GM12878 (cell line): ENCODE measurements at regions of chr16 and their contacts with region 1.

Region 1: GRCh38 chr16:50152807-50153452 is at the start of gene TENT4B:
- DNase-seq: peak; percentile 57
- ATAC-seq: peak; percentile 78
- H3K4me3 ChIP-seq: peak within 1 kb of the TSS; percentile 87
- H3K27ac ChIP-seq: peak within 1 kb of the TSS; percentile 96
- H3K4me1 ChIP-seq: peaks cover 6% of the 10 kb centered on the region
- H3K27me3 ChIP-seq: no peaks in the 10 kb centered on the region
- CTCF ChIP-seq: no peak
- EP300 ChIP-seq: no peak
- POLR2A ChIP-seq: peak; percentile 94
- RAD21 ChIP-seq: no peak
- polyA plus RNA-seq, gene TENT4B: 11.7 to 16.7 TPM

Region 2: DNA sequence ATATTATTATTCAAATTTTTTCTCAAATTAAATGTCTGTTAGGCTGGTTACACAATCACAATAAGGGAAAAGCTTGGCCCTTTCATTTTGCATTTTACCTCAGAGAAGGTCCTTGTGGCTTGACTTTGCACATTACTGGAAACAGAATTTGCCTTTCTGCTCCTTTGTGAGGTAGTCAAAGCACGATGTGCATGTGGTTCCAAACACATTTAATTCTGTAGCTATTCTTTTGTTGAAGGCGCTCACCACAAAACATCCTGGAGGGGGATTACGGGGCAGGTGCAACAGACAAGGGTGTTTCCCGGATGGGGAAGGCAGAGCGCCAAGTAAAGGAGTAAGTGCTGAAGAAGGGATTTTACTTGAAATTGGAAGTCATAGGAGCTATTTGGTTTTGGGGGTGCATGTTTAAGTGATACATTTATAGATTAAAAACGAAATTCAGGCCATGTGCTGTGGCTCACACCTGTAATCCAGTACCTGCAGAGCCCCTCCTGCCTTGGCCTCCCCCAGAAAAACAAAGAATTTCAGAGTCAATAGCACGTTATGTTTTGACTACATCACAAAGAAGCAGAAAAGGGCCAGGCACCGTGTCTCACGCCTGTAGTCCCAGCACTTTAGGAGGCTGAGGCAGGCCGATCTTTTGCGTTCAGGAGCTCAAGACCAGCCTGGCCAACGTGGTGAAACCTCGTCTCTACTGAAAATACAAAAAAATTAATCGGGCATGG is 31.0 kb before region 1 on chr16:
- CTCF ChIA-PET with region 1: interaction called, 9 read pairs
- POLR2A ChIA-PET with region 1: interaction called, 18 read pairs
- RAD21 ChIA-PET with region 1: interaction called, 10 read pairs
- SMC1A ChIA-PET with region 1: interaction called, 17 read pairs
- in situ Hi-C with region 1: no loop called
- intact Hi-C with region 1: loop called (anchors 2 kb)
- DNase-seq: peak; percentile 72
- ATAC-seq: peak; percentile 82
- H3K4me3 ChIP-seq: peak overlapping the region; percentile 16; the same call in 1 of the 2 replicates
- H3K27ac ChIP-seq: peak overlapping the region; percentile 75
- H3K4me1 ChIP-seq: peaks cover 32% of the 10 kb centered on the region
- H3K27me3 ChIP-seq: no peaks in the 10 kb centered on the region
- CTCF ChIP-seq: no peak
- EP300 ChIP-seq: peak; percentile 56 to 85; a peak in 3 of 4 replicates
- POLR2A ChIP-seq: no peak
- RAD21 ChIP-seq: no peak

Region 3: DNA sequence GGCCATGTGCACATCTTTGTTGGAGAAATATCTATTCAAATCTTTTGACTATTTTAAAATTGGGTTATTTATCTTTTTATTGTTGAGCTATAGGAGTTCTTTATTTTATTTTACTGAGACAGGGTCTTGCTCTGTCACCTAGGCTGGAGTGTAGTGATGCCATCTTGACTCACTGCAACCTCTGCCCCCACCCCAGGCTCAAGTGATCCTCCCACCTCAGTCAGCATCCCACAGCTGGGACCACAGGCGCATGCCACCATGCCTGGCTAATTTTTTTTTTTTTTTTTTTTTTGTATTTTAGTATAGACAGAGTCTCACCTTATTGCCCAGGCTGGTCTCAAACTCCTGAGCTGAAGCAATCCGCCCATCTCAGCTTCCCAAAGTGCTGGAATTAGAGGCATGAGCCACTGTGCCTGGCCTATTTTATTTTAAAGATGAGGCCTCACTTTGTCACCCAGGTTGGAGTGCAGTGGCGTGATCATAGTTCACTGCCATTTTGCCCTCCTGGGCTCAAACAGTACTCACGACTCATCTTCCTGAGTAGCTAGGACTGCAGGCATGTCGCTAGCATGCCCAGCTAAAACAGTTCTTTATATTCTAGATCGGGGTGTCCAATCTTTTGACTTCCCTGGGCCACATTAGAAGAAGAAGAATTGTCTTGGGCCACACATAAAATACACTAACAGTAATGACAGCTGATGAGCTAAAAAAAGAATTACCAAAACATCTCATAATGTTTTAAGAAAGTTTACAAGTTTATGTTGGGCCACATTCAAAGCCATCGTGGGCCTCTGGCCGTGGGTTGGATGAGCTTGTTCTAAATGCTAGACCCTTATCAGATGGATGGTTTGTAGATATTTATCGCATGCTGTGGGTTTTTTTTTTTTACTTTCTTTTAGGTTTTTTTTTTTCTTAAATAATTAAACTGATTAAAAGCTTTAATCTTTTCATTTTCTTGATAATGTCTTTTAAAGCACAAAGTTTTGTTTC is 13.9 kb after region 1 on chr16:
- CTCF ChIA-PET with region 1: interaction called, 6 read pairs
- POLR2A ChIA-PET with region 1: interaction called, 9 read pairs
- RAD21 ChIA-PET with region 1: interaction called, 3 read pairs
- SMC1A ChIA-PET with region 1: interaction called, 20 read pairs
- in situ Hi-C with region 1: no loop called
- intact Hi-C with region 1: no loop called
- DNase-seq: no peak
- ATAC-seq: no peak
- H3K4me3 ChIP-seq: peak overlapping the region; percentile 15; the same call in 1 of the 2 replicates
- H3K27ac ChIP-seq: peak overlapping the region; percentile 9; the same call in 1 of the 2 replicates
- H3K4me1 ChIP-seq: peaks cover 6% of the 10 kb centered on the region; the same call in 1 of the 2 replicates
- H3K27me3 ChIP-seq: no peaks in the 10 kb centered on the region
- CTCF ChIP-seq: no peak
- EP300 ChIP-seq: no peak
- POLR2A ChIP-seq: no peak
- RAD21 ChIP-seq: no peak

Region 4: GRCh38 chr16:50195276-50195675 is 42.3 kb after region 1 on chr16:
- CTCF ChIA-PET with region 1: interaction called, 3 read pairs
- POLR2A ChIA-PET with region 1: interaction called, 13 read pairs
- RAD21 ChIA-PET with region 1: interaction called, 3 read pairs
- SMC1A ChIA-PET with region 1: interaction called, 10 read pairs
- in situ Hi-C with region 1: no loop called
- intact Hi-C with region 1: loop called (anchors 5 kb)
- DNase-seq: no peak
- ATAC-seq: peak; percentile 12
- H3K4me3 ChIP-seq: peak overlapping the region; percentile 43; the same call in 1 of the 2 replicates
- H3K27ac ChIP-seq: peak overlapping the region; percentile 75
- H3K4me1 ChIP-seq: peaks cover 42% of the 10 kb centered on the region
- H3K27me3 ChIP-seq: no peaks in the 10 kb centered on the region
- CTCF ChIP-seq: no peak
- EP300 ChIP-seq: no peak
- POLR2A ChIP-seq: no peak
- RAD21 ChIP-seq: no peak

Region 5: GRCh38 chr16:50273681-50274325 is 120.9 kb after region 1 on chr16:
- CTCF ChIA-PET with region 1: interaction called, 5 read pairs
- POLR2A ChIA-PET with region 1: interaction called, 3 read pairs
- RAD21 ChIA-PET with region 1: no interaction called
- SMC1A ChIA-PET with region 1: interaction called, 3 read pairs
- in situ Hi-C with region 1: no loop called
- intact Hi-C with region 1: loop called (anchors 10 kb)
- DNase-seq: peak; percentile 64
- ATAC-seq: peak; percentile 80
- H3K4me3 ChIP-seq: peak overlapping the region; percentile 70
- H3K27ac ChIP-seq: peak overlapping the region; percentile 93
- H3K4me1 ChIP-seq: peaks cover 49% of the 10 kb centered on the region
- H3K27me3 ChIP-seq: no peaks in the 10 kb centered on the region
- CTCF ChIP-seq: no peak
- EP300 ChIP-seq: peak in 1 of 2 experiments; percentile 47; a peak in 2 of 4 replicates
- POLR2A ChIP-seq: peak; percentile 59
- RAD21 ChIP-seq: no peak

Region 6: DNA sequence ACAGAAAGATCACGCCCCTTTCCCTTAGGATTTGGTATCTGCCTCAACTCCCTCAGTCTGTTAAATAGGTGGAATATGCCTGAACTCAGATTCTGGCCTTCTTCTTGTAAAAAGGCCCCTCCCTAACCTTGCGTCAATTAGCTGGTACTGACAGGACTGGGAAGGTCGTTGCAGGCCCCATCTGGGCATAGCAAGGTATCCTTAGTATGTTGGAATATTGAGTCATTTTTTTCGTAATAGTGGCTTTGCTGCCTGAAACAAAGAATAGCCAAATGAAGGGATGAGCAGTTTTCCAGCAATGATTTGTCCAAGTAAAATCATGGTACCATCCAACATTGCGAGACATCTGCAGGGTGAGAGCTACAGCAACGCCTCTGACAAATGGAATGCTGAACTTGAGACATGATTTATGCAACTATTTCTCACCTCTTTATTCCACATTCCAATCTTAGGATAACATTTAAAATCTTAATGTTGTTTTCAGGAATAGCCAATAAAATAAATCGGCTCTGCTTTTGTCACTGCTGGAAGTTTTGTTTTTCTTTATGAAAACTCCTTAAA is 255.2 kb after region 1 on chr16:
- CTCF ChIA-PET with region 1: no interaction called
- POLR2A ChIA-PET with region 1: no interaction called
- RAD21 ChIA-PET with region 1: no interaction called
- SMC1A ChIA-PET with region 1: no interaction called
- in situ Hi-C with region 1: no loop called
- intact Hi-C with region 1: no loop called
- DNase-seq: no peak
- ATAC-seq: no peak
- H3K4me3 ChIP-seq: no peak overlapping the region
- H3K27ac ChIP-seq: no peak overlapping the region
- H3K4me1 ChIP-seq: no peaks in the 10 kb centered on the region
- H3K27me3 ChIP-seq: no peaks in the 10 kb centered on the region
- CTCF ChIP-seq: no peak
- EP300 ChIP-seq: no peak
- POLR2A ChIP-seq: no peak
- RAD21 ChIP-seq: no peak

Region 7: DNA sequence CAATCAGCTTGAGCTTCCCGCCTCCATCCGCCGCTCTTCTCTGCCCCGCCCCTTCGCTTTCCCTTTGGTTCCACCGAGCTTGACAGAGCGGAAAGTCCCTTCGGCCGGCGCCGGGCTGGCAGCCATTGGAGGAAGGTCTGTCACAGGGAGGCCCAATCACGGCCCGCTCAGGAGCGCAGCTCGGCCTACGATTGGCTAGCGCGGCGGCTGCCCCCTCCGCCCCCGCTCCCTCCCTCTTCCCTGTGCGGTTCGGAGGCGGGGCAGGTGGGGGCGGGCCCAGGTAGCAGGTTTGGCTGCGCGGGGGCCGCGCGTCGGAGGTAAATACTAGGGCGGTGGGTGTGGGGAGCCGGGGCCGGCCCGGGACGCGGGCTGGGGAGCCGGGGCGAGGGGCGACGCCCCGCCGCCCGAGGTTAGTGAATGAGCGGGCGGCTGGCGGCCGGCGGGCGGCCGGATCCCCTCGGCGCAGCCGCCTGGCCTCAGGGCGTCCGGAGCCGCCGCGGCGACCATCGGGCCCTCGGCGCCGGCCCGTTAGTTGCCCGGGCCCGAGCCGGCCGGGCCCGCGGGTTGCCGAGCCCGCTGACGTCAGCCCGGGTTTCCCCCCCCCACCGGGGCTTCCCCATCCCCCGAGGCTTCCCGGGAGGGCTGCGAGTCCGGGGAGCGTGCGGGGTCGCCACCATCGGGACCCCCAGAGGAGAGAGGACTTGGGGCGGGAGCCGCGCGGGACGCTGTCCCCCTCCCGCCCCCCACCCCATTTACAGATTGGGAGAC is 589.1 kb after region 1 on chr16 and contains the start of gene CYLD:
- CTCF ChIA-PET with region 1: no interaction called
- POLR2A ChIA-PET with region 1: interaction called, 3 read pairs
- RAD21 ChIA-PET with region 1: no interaction called
- SMC1A ChIA-PET with region 1: no interaction called
- in situ Hi-C with region 1: no loop called
- intact Hi-C with region 1: loop called (anchors 10 kb)
- DNase-seq: peak; percentile 95
- ATAC-seq: peak; percentile 95
- H3K4me3 ChIP-seq: peak within 1 kb of the TSS; percentile 84
- H3K27ac ChIP-seq: peak within 1 kb of the TSS; percentile 98
- H3K4me1 ChIP-seq: peaks cover 21% of the 10 kb centered on the region
- H3K27me3 ChIP-seq: no peaks in the 10 kb centered on the region
- CTCF ChIP-seq: no peak
- EP300 ChIP-seq: no peak
- POLR2A ChIP-seq: peak; percentile 36
- RAD21 ChIP-seq: no peak
- polyA plus RNA-seq, gene CYLD: 19.2 to 27.0 TPM